ENCODE measurements at regions of chr22 and their contacts with region 1.

Region 1: GRCh38 chr22:20418211-20418788 is 19.3 kb downstream of the SCARF2 start:
- DNase-seq: peak; percentile 74 to 90
- ATAC-seq: peak; percentile 83 to 91 (median 90)
- H3K4me3 ChIP-seq: peak overlapping the region; percentile 23
- H3K4me3 Mint-ChIP-seq: peak overlapping the region; percentile 45
- H3K27ac ChIP-seq: no peak overlapping the region
- H3K27ac Mint-ChIP-seq: no peak overlapping the region
- H3K4me1 ChIP-seq: peaks cover 8% of the 10 kb centered on the region
- H3K4me1 Mint-ChIP-seq: no peaks in the 10 kb centered on the region
- H3K27me3 ChIP-seq: no peaks in the 10 kb centered on the region
- H3K27me3 Mint-ChIP-seq: no peaks in the 10 kb centered on the region
- CTCF ChIP-seq: peak; percentile 78

Region 2: GRCh38 chr22:20405931-20406685 is 12.2 kb before region 1 on chr22:
- intact Hi-C with region 1: no loop called
- DNase-seq: no peak
- ATAC-seq: no peak
- H3K4me3 ChIP-seq: no peak overlapping the region
- H3K4me3 Mint-ChIP-seq: no peak overlapping the region
- H3K27ac ChIP-seq: no peak overlapping the region
- H3K27ac Mint-ChIP-seq: no peak overlapping the region
- H3K4me1 ChIP-seq: peaks cover 35% of the 10 kb centered on the region
- H3K4me1 Mint-ChIP-seq: peaks cover 14 to 15% of the 10 kb centered on the region in 2 donors
- H3K27me3 ChIP-seq: no peaks in the 10 kb centered on the region
- H3K27me3 Mint-ChIP-seq: no peaks in the 10 kb centered on the region
- CTCF ChIP-seq: no peak

Region 3: GRCh38 chr22:20456064-20456721 is 37.9 kb after region 1 on chr22:
- intact Hi-C with region 1: loop called (anchors 1 kb)
- DNase-seq: peak; percentile 58 to 90
- ATAC-seq: peak; percentile 89 to 100 (median 99)
- H3K4me3 ChIP-seq: no peak overlapping the region
- H3K4me3 Mint-ChIP-seq: no peak overlapping the region
- H3K27ac ChIP-seq: no peak overlapping the region
- H3K27ac Mint-ChIP-seq: no peak overlapping the region
- H3K4me1 ChIP-seq: peaks cover 9% of the 10 kb centered on the region
- H3K4me1 Mint-ChIP-seq: peaks cover 10% of the 10 kb centered on the region in 2 donors
- H3K27me3 ChIP-seq: no peaks in the 10 kb centered on the region
- H3K27me3 Mint-ChIP-seq: no peaks in the 10 kb centered on the region
- CTCF ChIP-seq: peak; percentile 76

Region 4: GRCh38 chr22:20495861-20496681 is 77.8 kb after region 1 on chr22:
- intact Hi-C with region 1: loop called (anchors 1 kb)
- DNase-seq: peak; percentile 91 to 96
- ATAC-seq: peak; percentile 94 to 98 (median 95)
- H3K4me3 ChIP-seq: peak overlapping the region; percentile 66
- H3K4me3 Mint-ChIP-seq: peak overlapping the region; percentile 96
- H3K27ac ChIP-seq: peak overlapping the region; percentile 97
- H3K27ac Mint-ChIP-seq: peak overlapping the region; percentile 91 to 96
- H3K4me1 ChIP-seq: peaks cover 25% of the 10 kb centered on the region
- H3K4me1 Mint-ChIP-seq: peaks cover 20 to 41% of the 10 kb centered on the region in 2 donors
- H3K27me3 ChIP-seq: no peaks in the 10 kb centered on the region
- H3K27me3 Mint-ChIP-seq: no peaks in the 10 kb centered on the region
- CTCF ChIP-seq: peak; percentile 81

Region 5: GRCh38 chr22:20741634-20742581 is 323.6 kb after region 1 on chr22:
- intact Hi-C with region 1: loop called (anchors 5 kb)
- DNase-seq: peak in 1 of 2 donors; percentile 68
- ATAC-seq: no peak
- H3K4me3 ChIP-seq: no peak overlapping the region
- H3K4me3 Mint-ChIP-seq: no peak overlapping the region
- H3K27ac ChIP-seq: no peak overlapping the region
- H3K27ac Mint-ChIP-seq: no peak overlapping the region
- H3K4me1 ChIP-seq: no peaks in the 10 kb centered on the region
- H3K4me1 Mint-ChIP-seq: peaks cover 5 to 6% of the 10 kb centered on the region in 2 donors
- H3K27me3 ChIP-seq: no peaks in the 10 kb centered on the region
- H3K27me3 Mint-ChIP-seq: no peaks in the 10 kb centered on the region
- CTCF ChIP-seq: peak; percentile 77